ENCODE measurements at regions of chr14 and their contacts with region 1.

Region 1: GRCh38 chr14:38003746-38004609 is 203.7 kb upstream of the SSTR1 start:
- DNase-seq: no peak
- ATAC-seq: no peak
- H3K4me3 ChIP-seq: no peak overlapping the region
- H3K27ac ChIP-seq: no peak overlapping the region
- H3K4me1 ChIP-seq: no peaks in the 10 kb centered on the region
- H3K27me3 ChIP-seq: no peaks in the 10 kb centered on the region
- CTCF ChIP-seq: no peak
- EP300 ChIP-seq: no peak
- POLR2A ChIP-seq: no peak
- RAD21 ChIP-seq: no peak

Region 2: DNA sequence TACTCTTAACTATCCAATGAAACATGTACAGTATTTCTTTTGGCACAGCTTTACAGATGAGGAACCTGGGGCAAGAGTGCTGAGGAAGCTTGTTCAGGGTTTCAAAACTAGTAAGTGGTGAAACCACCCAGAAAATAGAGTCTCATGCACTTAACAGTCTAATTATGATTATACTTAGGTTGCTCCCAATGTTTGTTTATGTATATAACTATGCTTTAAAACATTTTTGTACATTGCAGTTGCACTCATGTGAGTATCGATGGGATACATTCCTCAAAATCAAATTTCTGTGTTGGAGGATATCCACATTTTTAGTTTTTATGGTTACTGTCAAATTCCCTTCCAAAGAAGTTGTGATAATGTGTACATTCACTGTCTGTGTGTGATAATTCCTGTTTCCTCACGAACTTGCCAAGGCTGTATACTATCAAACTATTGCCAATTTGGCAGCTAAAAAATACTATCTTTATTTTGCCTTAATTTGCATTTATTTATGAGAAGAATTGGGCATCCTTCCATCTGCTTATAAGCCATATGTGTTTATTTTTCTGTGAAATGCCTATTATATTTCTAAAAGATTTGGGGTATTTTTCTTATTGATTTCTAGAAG is 59.8 kb after region 1 on chr14:
- CTCF ChIA-PET with region 1: no interaction called
- POLR2A ChIA-PET with region 1: no interaction called
- in situ Hi-C with region 1: no loop called
- intact Hi-C with region 1: loop called (anchors 2 kb)
- DNase-seq: no peak
- ATAC-seq: no peak
- H3K4me3 ChIP-seq: no peak overlapping the region
- H3K27ac ChIP-seq: no peak overlapping the region
- H3K4me1 ChIP-seq: no peaks in the 10 kb centered on the region
- H3K27me3 ChIP-seq: no peaks in the 10 kb centered on the region
- CTCF ChIP-seq: no peak
- EP300 ChIP-seq: no peak
- POLR2A ChIP-seq: no peak
- RAD21 ChIP-seq: no peak

Region 3: DNA sequence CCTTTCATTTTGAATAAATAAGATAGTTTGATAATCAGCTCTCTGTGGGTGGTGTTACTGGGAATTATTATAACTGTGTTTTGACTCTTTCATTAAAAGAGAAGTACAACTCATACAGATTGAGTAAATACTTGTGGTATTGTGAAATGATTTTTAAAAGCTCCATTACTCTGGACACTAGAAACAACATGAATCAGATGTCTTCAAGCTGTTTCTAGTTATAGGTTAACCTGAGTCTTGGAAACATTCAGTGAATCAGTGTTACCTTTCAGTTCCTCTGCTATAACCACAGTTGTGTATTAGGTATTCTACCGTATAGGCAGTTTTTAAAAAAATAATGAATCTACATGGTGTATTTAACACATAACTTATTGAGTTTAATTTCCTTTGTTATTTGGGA is 75.3 kb after region 1 on chr14:
- CTCF ChIA-PET with region 1: no interaction called
- POLR2A ChIA-PET with region 1: no interaction called
- in situ Hi-C with region 1: no loop called
- intact Hi-C with region 1: no loop called
- DNase-seq: no peak
- ATAC-seq: no peak
- H3K4me3 ChIP-seq: no peak overlapping the region
- H3K27ac ChIP-seq: no peak overlapping the region
- H3K4me1 ChIP-seq: no peaks in the 10 kb centered on the region
- H3K27me3 ChIP-seq: no peaks in the 10 kb centered on the region
- CTCF ChIP-seq: no peak
- EP300 ChIP-seq: no peak
- POLR2A ChIP-seq: no peak
- RAD21 ChIP-seq: no peak